ENCODE measurements at regions of chr14 and their contacts with region 1.

Region 1: GRCh38 chr14:39102969-39103957 is at the start of gene SEC23A:
- DNase-seq: peak; percentile 95
- ATAC-seq: peak; percentile 99
- total RNA-seq, gene SEC23A: 79.7 TPM

Region 2: GRCh38 chr14:38536376-38537038 is 566.8 kb before region 1 on chr14:
- intact Hi-C with region 1: no loop called
- DNase-seq: no peak
- ATAC-seq: no peak

Region 3: DNA sequence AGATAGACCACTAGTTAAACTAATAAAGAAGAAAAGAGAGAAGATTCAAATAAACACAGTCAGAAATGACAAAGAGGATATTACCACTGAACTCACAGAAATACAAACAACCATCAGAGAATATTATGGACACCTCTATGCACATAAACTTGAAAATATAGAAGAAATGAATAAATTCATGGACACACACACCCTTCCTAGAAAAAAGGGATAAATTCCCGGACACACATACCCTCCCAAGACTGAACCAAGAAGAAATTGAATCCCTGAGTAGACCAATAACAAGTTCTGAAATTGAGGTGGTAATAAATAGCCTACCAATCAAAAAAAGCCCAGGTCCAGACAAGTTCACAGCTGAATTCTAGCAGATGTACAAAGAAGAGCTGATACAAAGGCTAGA is 188.1 kb before region 1 on chr14:
- intact Hi-C with region 1: no loop called
- DNase-seq: no peak
- ATAC-seq: no peak

Region 4: GRCh38 chr14:39426605-39427004 is 323.3 kb after region 1 on chr14:
- intact Hi-C with region 1: loop called (anchors 10 kb)
- DNase-seq: no peak
- ATAC-seq: no peak